Activated naive CD4-positive, alpha-beta T cell treated with anti-CD3 and anti-CD28 coated beads for 36 hours (primary cell): ENCODE measurements at regions of chrX and their contacts with region 1.

Region 1: GRCh38 chrX:140664939-140665338 is 44.6 kb upstream of the LINC00632 start:
- DNase-seq: no peak
- H3K4me3 Mint-ChIP-seq: no peak overlapping the region
- H3K27ac Mint-ChIP-seq: no peak overlapping the region
- H3K4me1 Mint-ChIP-seq: no peaks in the 10 kb centered on the region
- H3K27me3 Mint-ChIP-seq: peaks cover 3% of the 10 kb centered on the region

Region 2: GRCh38 chrX:140057001-140057411 is 607.9 kb before region 1 on chrX:
- CTCF ChIA-PET with region 1: no interaction called
- intact Hi-C with region 1: loop called (anchors 5 kb)
- DNase-seq: peak; percentile 69
- H3K4me3 Mint-ChIP-seq: no peak overlapping the region
- H3K27ac Mint-ChIP-seq: no peak overlapping the region
- H3K4me1 Mint-ChIP-seq: peaks cover 2% of the 10 kb centered on the region
- H3K27me3 Mint-ChIP-seq: no peaks in the 10 kb centered on the region

Region 3: DNA sequence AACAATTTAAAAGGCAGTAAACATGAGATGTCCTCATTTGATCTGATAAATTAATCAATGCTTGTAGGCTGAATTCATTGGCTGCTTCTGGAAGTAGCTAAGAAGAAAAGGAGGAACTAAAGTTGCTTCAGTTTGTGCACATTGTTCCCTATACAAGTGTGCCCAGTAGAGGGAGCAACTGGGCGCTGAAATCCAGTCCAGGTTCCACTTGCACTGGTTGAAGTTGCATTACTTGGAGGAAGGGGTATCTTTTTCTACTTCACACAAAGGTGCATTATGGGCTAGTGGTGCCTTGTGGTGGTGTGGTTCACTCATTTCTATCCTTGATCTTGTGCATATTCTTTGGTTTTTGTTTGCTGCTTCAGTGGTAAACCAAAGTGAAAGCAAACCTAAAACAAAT is 92.2 kb before region 1 on chrX:
- CTCF ChIA-PET with region 1: no interaction called
- intact Hi-C with region 1: loop called (anchors 2 kb)
- DNase-seq: peak; percentile 27
- H3K4me3 Mint-ChIP-seq: no peak overlapping the region
- H3K27ac Mint-ChIP-seq: no peak overlapping the region
- H3K4me1 Mint-ChIP-seq: no peaks in the 10 kb centered on the region
- H3K27me3 Mint-ChIP-seq: no peaks in the 10 kb centered on the region